Activated CD4-positive, alpha-beta T cell treated with anti-CD3 and anti-CD28 coated beads for 36 hours (primary cell): ENCODE measurements at regions of chr1 and their contacts with region 1.

Region 1: GRCh38 chr1:192654591-192655251 is 18.8 kb downstream of the RGS13 start:
- DNase-seq: peak; percentile 29
- ATAC-seq: peak; percentile 88
- H3K4me3 Mint-ChIP-seq: no peak overlapping the region
- H3K27ac Mint-ChIP-seq: peak overlapping the region; percentile 45
- H3K4me1 Mint-ChIP-seq: peaks cover 12% of the 10 kb centered on the region
- H3K27me3 Mint-ChIP-seq: peaks cover 9% of the 10 kb centered on the region

Region 2: DNA sequence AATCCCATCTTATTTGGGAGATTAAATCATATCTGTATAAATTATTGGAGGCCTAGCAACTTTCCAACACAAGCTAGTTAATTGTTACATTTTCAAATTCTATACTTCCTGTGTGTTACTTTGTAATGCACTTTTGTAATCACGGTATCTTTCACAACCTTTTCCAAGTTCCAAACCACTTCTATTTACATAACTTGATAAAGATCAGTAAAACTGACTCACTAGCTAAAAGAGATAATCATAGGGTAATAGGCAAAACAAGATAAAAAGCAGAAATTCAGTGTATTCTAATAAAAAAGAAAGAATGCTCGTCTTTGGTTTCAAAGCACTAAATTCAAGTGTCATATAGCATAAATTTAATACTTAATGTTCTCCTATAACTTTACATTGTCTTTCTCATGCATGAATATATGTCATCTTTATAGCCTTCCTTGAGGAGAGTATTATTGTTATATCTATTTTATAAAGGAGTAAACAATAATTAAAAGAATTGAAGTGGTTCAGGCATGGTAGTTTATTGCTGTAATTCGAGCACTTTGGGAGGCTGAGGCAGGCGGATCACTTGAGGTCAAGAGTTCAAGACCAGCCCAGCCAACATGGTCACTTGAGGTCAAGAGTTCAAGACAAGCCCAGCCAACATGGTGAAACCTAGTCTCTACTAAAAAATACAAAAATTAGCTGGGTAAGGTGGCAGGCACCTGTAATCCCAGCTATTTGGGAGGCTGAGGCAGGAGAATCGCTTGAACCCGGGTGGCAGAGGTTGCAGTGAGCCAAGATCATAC is 47.7 kb after region 1 on chr1:
- CTCF ChIA-PET with region 1: no interaction called
- POLR2A ChIA-PET with region 1: no interaction called
- intact Hi-C with region 1: loop called in 1 of 2 experiments (anchors 2 kb)
- DNase-seq: no peak
- ATAC-seq: no peak
- H3K4me3 Mint-ChIP-seq: no peak overlapping the region
- H3K27ac Mint-ChIP-seq: no peak overlapping the region
- H3K4me1 Mint-ChIP-seq: peaks cover 9% of the 10 kb centered on the region
- H3K27me3 Mint-ChIP-seq: peaks cover 13% of the 10 kb centered on the region